Activated naive CD4-positive, alpha-beta T cell treated with anti-CD3 and anti-CD28 coated beads for 36 hours (primary cell): ENCODE measurements at regions of chr1 and their contacts with region 1.

Region 1: GRCh38 chr1:21294266-21294989 is 4.2 kb upstream of the ECE1 start:
- DNase-seq: peak; percentile 97
- H3K4me3 Mint-ChIP-seq: peak overlapping the region; percentile 67
- H3K27ac Mint-ChIP-seq: peak overlapping the region; percentile 99
- H3K4me1 Mint-ChIP-seq: peaks cover 89% of the 10 kb centered on the region
- H3K27me3 Mint-ChIP-seq: no peaks in the 10 kb centered on the region

Region 2: DNA sequence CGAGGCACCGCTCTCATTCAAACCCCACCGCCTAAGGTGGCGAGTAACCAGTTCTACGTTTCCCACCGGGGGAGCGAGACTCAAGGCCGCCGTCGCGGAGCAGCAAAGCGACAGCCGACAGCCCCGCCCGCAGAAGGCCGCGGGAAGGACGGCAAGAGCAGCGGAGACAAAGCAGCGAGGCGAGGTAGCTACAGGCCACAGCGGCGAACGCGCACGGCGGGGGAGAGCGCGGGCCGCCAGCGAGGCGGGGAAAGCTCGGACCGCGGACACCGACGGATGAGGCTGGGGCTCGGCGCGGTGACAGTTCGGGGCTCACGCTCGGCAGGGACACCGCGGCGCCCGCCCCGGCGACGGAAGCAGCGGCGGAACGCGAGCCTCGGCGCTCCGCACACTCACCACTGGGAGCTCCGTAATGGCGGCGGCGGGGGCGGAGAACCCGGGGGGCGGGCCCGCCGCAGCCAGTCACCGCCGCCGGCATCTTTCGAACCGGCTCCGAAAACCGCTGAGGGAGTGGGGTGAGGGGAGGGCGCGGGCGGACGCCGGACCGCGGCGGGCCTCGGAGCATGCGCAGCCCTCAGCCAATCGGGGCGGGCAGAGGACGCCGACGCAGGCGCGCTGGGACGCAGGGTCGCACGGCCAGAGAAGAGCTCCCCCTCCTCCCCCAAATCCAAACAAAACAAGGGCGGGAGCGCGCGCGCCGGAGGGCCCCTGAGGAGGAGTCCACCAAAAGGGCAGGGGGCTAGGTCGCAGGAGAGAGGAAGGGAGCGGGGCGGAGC is 508.0 kb before region 1 on chr1:
- CTCF ChIA-PET with region 1: no interaction called
- intact Hi-C with region 1: loop called (anchors 2 kb)
- DNase-seq: peak; percentile 97
- H3K4me3 Mint-ChIP-seq: peak overlapping the region; percentile 87
- H3K27ac Mint-ChIP-seq: peak overlapping the region; percentile 94
- H3K4me1 Mint-ChIP-seq: peaks cover 32% of the 10 kb centered on the region
- H3K27me3 Mint-ChIP-seq: peaks cover 2% of the 10 kb centered on the region

Region 3: GRCh38 chr1:21255278-21255942 is 39.0 kb before region 1 on chr1:
- CTCF ChIA-PET with region 1: interaction called, 8 read pairs
- intact Hi-C with region 1: loop called (anchors 1 kb)
- DNase-seq: peak; percentile 90
- H3K4me3 Mint-ChIP-seq: no peak overlapping the region
- H3K27ac Mint-ChIP-seq: peak overlapping the region; percentile 66
- H3K4me1 Mint-ChIP-seq: peaks cover 53% of the 10 kb centered on the region
- H3K27me3 Mint-ChIP-seq: no peaks in the 10 kb centered on the region

Region 4: DNA sequence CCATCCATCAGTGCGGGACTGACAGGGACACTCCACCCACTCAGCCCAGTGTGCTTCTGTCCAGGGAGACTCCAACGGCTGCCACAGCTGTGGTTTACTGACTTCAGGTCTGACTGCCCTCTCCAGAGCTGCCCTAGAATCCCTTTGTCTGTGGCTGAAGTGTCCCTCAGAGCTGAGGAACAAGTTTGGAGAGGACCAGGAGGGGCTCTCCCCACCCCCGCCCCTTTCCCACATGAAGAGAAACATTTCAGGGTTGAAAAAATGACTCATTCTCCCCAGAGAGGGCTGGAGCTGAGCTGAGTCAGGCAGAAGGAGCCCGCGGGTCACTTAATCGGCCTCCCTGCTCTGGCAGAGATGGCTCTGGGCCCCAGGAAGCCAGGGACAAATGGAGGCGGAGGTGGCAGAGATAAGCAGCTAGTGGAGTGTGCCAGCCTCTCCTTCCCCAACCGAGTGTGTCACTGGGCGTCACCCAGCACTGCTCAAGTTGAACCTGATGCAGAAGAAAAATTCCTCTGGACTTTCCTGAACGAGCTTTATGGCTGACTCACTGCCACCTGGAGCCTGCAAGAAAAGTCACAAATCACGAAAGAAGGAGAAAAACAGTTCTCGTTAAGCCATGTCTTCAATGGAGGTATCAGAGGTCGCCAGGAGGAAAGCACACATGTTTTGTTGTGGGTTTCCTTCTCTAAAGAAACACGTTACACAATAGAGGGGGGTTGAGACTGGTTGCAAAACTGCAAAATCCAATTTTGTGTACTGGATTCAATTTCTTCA is 30.1 kb after region 1 on chr1:
- CTCF ChIA-PET with region 1: interaction called, 41 read pairs
- intact Hi-C with region 1: loop called (anchors 1 kb)
- DNase-seq: peak; percentile 89
- H3K4me3 Mint-ChIP-seq: peak overlapping the region; percentile 63
- H3K27ac Mint-ChIP-seq: peak overlapping the region; percentile 97
- H3K4me1 Mint-ChIP-seq: peaks cover 90% of the 10 kb centered on the region
- H3K27me3 Mint-ChIP-seq: no peaks in the 10 kb centered on the region

Region 5: GRCh38 chr1:21344750-21345443 is 50.5 kb after region 1 on chr1:
- CTCF ChIA-PET with region 1: interaction called, 8 read pairs
- intact Hi-C with region 1: loop called (anchors 1 kb)
- DNase-seq: no peak
- H3K4me3 Mint-ChIP-seq: peak overlapping the region; percentile 92
- H3K27ac Mint-ChIP-seq: peak overlapping the region; percentile 92
- H3K4me1 Mint-ChIP-seq: peaks cover 39% of the 10 kb centered on the region
- H3K27me3 Mint-ChIP-seq: no peaks in the 10 kb centered on the region